PC-9 (cell line): ENCODE measurements at regions of chr6 and their contacts with region 1.

Region 1: DNA sequence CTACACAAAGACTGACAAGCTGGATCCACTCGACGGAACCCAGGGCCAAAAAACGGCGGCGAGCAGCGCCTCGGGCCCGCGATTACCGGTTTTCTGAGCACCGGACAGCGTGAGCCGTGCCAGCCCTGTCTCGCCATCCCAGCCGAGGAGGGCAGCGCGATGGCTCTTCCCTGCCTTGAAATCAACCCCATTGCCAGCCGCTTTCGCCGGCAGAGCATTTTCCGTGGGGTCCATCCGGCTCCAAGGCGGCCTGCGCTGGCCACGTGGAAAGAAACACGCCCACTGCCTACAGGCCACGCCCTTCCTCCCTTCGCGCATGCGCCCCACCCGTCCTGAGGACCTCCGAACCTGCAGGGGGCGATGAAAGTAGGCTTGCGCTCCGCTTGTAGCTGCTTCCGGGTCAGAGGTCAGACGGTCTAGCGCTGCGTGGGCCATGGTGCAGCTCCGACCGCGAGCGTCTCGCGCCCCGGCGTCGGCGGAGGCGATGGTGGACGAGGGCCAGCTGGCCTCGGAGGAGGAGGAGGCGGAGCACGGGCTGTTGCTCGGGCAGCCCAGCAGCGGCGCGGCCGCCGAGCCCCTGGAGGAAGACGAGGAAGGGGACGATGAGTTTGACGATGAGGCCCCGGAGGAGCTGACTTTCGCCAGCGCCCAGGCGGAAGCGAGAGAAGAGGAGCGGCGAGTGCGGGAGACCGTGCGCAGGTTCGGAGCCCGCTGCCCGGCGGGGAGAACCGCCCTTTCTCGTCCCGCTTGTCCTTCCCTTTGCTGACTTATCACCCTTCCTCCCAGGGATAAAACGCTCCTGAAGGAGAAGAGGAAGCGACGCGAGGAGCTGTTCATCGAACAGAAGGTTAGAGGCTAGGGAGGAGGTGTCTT is at the start of gene NOL7:
- DNase-seq: peak; percentile 91 to 98
- H3K4me3 ChIP-seq: peak within 1 kb of the TSS; percentile 98
- H3K27ac ChIP-seq: peak within 1 kb of the TSS; percentile 88
- H3K4me1 ChIP-seq: peaks cover 23% of the 10 kb centered on the region
- H3K27me3 ChIP-seq: no peaks in the 10 kb centered on the region
- CTCF ChIP-seq: peak; percentile 76
- total RNA-seq, gene NOL7: 75.9 and 78.6 TPM in 2 replicates

Region 2: DNA sequence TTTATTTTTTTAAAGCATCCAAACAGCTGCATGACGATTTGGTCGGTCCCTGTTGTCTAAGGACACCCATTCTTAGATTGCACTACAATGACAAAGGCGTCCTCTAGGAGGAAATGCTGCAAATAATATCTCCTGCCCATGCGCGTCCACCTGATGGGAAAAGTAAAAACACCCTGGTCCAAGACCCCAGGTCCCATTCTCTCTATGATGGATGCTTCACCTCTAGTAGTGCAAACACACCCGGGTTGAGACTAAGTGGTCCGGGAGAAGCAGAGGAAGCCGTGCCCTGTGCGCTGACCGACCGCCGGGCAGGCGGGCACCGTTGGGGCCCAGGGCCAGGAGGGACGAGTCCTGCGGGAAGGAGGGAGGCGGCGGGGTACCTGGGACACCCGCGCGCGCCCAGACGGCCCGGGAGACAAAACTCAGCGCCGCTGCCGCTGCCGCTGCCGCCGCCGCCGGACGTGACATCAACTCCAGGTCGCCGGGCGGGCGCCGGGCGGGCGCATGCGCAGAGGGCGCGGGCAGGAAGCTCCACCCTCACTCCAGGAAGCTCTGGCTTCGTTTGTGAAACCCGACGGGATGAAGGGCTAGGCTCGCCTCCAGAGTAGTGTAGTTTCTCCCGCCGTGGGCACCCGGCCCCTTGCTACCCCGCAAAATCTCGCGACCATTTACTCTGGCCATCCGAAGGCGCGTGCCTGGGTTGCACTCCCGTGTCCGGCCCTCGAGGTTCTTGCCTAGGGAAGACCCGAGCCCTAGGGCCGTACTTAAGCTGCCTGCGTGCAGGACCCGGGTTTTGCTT is 286.9 kb before region 1 on chr6 and contains the start of gene TBC1D7:
- CTCF ChIA-PET with region 1: no interaction called
- POLR2A ChIA-PET with region 1: interaction called, 3 read pairs
- intact Hi-C with region 1: loop called (anchors 2 kb)
- DNase-seq: peak; percentile 80 to 96
- H3K4me3 ChIP-seq: peak within 1 kb of the TSS; percentile 95
- H3K27ac ChIP-seq: peak within 1 kb of the TSS; percentile 69
- H3K4me1 ChIP-seq: peaks cover 22% of the 10 kb centered on the region
- H3K27me3 ChIP-seq: no peaks in the 10 kb centered on the region
- CTCF ChIP-seq: no peak
- total RNA-seq, gene TBC1D7: 29.2 and 30.4 TPM in 2 replicates

Region 3: DNA sequence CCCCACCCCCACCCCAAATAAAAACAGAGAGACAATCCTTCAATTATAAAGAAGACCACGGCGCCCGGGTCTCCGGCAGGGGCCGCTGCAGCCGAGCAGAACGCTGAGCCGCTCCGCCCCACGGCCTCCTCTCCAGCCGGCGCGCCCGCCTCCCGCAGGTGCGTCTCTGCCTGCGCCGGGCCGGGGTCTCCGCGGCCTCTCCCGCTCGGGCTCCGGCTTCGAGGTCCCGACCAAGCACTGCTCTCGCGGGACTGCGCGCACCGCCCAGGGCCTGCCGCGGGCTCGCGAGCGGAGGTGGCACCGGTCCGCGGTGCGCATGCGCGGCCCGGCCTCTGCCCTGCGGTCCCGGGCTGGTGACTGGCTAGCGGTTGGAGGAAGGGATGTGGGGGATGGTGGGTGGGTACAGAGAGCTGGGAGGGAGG is 41.0 kb before region 1 on chr6:
- CTCF ChIA-PET with region 1: interaction called, 5 read pairs
- POLR2A ChIA-PET with region 1: interaction called, 9 read pairs
- intact Hi-C with region 1: loop called (anchors 1 kb)
- DNase-seq: peak; percentile 80 to 96
- H3K4me3 ChIP-seq: peak overlapping the region; percentile 92
- H3K27ac ChIP-seq: peak overlapping the region; percentile 96
- H3K4me1 ChIP-seq: peaks cover 17% of the 10 kb centered on the region
- H3K27me3 ChIP-seq: no peaks in the 10 kb centered on the region
- CTCF ChIP-seq: peak; percentile 52

Region 4: GRCh38 chr6:13653296-13653695 is 38.1 kb after region 1 on chr6:
- CTCF ChIA-PET with region 1: no interaction called
- POLR2A ChIA-PET with region 1: no interaction called
- intact Hi-C with region 1: no loop called
- DNase-seq: no peak
- H3K4me3 ChIP-seq: no peak overlapping the region
- H3K27ac ChIP-seq: no peak overlapping the region
- H3K4me1 ChIP-seq: peaks cover 14% of the 10 kb centered on the region
- H3K27me3 ChIP-seq: no peaks in the 10 kb centered on the region
- CTCF ChIP-seq: no peak

Region 5: GRCh38 chr6:13696226-13696625 is 81.1 kb after region 1 on chr6:
- CTCF ChIA-PET with region 1: no interaction called
- POLR2A ChIA-PET with region 1: no interaction called
- intact Hi-C with region 1: no loop called
- DNase-seq: no peak
- H3K4me3 ChIP-seq: no peak overlapping the region
- H3K27ac ChIP-seq: no peak overlapping the region
- H3K4me1 ChIP-seq: no peaks in the 10 kb centered on the region
- H3K27me3 ChIP-seq: no peaks in the 10 kb centered on the region
- CTCF ChIP-seq: no peak

Region 6: GRCh38 chr6:13795041-13795750 is 180.0 kb after region 1 on chr6:
- CTCF ChIA-PET with region 1: no interaction called
- POLR2A ChIA-PET with region 1: no interaction called
- intact Hi-C with region 1: loop called (anchors 5 kb)
- DNase-seq: peak; percentile 71 to 77
- H3K4me3 ChIP-seq: no peak overlapping the region
- H3K27ac ChIP-seq: peak overlapping the region; percentile 49
- H3K4me1 ChIP-seq: peaks cover 41% of the 10 kb centered on the region
- H3K27me3 ChIP-seq: no peaks in the 10 kb centered on the region
- CTCF ChIP-seq: peak; percentile 94

Region 7: DNA sequence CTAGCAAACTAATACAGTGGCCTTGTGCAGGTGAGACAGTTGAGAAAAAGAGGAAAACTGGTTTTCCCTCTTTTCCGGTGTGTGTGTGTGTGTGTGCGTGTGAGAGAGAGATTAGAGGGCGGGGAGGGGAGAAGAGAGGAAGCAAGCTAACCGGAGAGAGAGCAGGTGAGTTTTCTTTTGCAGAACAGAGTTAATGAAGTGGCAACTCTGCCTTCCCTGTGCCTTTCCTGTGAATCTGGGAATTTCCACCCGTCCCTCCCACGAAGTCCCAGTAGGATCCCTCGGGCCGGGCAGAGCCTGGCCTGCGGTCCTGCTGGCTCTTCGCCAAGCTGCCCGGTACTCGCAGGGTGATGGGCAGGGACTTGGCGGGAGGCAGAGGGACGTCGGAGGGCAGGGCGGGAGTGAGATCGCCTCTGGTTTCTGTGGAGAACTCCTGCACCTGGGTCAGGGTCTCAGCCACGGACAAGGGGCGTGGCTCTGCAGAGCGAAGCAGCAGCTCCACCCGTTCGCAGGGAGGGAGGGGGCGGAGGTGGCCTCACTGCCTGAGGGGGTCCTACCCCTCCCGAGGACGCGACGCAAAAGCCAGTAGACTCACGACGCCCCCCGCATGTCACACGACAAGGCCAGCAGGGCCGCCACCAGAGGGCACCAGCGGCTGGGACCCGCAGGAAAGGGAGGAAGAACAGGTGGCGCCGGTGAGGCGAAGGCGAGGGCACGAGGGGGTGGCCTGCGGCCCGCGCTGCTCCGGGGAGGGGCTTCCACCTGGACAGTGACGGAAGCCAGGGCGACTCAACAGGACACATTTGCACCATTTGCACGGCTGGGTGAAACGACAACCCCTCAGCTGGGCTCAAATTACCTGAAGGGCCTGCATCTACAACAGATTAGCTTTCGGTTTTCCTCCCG is 258.4 kb after region 1 on chr6:
- CTCF ChIA-PET with region 1: no interaction called
- POLR2A ChIA-PET with region 1: no interaction called
- intact Hi-C with region 1: loop called (anchors 1 kb)
- DNase-seq: peak; percentile 72 to 91
- H3K4me3 ChIP-seq: peak overlapping the region; percentile 60
- H3K27ac ChIP-seq: peak overlapping the region; percentile 67
- H3K4me1 ChIP-seq: peaks cover 20% of the 10 kb centered on the region
- H3K27me3 ChIP-seq: no peaks in the 10 kb centered on the region
- CTCF ChIP-seq: peak; percentile 89